Esophagus muscularis mucosa (tissue), 4 donors: ENCODE measurements at regions of chr1 and their contacts with region 1.

Region 1: GRCh38 chr1:227437495-227438008 is 119.3 kb upstream of the CDC42BPA start:
- DNase-seq: no peak
- H3K4me3 ChIP-seq: peak overlapping the region; percentile 32 to 52 (median 47)
- H3K27ac ChIP-seq: peak overlapping the region in 1 of 4 donors; percentile 21
- H3K4me1 ChIP-seq: peaks cover 12 to 21% (median 16%) of the 10 kb centered on the region in 4 donors
- H3K27me3 ChIP-seq: no peaks in the 10 kb centered on the region
- CTCF ChIP-seq: peak; percentile 46 to 58 (median 52)
- EP300 ChIP-seq: no peak
- POLR2A ChIP-seq: no peak

Region 2: DNA sequence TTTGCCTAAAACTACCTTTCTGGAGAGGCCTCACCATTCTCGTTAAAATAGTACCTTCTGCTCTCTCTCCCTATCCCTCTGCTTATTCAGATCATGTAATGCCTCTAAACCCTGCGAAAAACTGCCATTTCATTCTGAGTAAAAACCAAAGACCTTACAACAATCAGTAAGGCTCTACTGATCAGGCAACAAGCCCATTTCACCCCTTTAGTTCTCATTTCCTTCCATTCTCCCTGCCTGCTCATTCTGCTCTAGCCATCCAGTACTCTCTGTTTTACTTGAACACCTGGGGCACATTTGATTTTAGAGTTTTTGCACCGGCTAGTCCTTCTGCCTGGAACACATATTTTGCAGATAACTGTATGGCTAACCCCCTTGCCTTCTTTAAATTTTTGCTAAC is 309.7 kb before region 1 on chr1:
- intact Hi-C with region 1: loop called (anchors 5 kb)
- DNase-seq: no peak
- H3K4me3 ChIP-seq: no peak overlapping the region
- H3K27ac ChIP-seq: no peak overlapping the region
- H3K4me1 ChIP-seq: no peaks in the 10 kb centered on the region
- H3K27me3 ChIP-seq: no peaks in the 10 kb centered on the region
- CTCF ChIP-seq: no peak
- EP300 ChIP-seq: no peak
- POLR2A ChIP-seq: no peak

Region 3: DNA sequence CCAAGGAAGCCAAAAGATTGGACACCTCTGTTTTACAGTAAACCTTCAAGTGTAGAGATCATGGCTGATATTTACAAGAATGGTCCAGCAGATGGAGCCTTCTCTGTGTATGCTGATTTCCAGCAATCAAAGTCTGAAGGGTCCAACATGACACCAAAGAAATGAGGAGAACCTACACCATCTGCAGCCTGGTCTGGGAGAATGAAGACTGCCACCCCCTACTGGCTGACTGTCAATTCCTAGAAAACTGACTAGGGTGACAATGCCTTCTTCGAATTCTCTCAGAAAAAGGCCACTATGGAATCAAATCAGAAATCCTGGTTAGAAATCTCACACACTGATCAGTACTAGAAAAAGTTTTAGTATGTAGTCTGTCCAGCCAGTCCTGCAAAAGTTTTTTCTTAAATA is 202.6 kb before region 1 on chr1:
- intact Hi-C with region 1: loop called (anchors 5 kb)
- DNase-seq: no peak
- H3K4me3 ChIP-seq: no peak overlapping the region
- H3K27ac ChIP-seq: no peak overlapping the region
- H3K4me1 ChIP-seq: peaks cover 0 to 23% (median 15%) of the 10 kb centered on the region in 4 donors
- H3K27me3 ChIP-seq: no peaks in the 10 kb centered on the region
- CTCF ChIP-seq: peak; percentile 25 to 48 (median 28)
- EP300 ChIP-seq: no peak
- POLR2A ChIP-seq: no peak

Region 4: DNA sequence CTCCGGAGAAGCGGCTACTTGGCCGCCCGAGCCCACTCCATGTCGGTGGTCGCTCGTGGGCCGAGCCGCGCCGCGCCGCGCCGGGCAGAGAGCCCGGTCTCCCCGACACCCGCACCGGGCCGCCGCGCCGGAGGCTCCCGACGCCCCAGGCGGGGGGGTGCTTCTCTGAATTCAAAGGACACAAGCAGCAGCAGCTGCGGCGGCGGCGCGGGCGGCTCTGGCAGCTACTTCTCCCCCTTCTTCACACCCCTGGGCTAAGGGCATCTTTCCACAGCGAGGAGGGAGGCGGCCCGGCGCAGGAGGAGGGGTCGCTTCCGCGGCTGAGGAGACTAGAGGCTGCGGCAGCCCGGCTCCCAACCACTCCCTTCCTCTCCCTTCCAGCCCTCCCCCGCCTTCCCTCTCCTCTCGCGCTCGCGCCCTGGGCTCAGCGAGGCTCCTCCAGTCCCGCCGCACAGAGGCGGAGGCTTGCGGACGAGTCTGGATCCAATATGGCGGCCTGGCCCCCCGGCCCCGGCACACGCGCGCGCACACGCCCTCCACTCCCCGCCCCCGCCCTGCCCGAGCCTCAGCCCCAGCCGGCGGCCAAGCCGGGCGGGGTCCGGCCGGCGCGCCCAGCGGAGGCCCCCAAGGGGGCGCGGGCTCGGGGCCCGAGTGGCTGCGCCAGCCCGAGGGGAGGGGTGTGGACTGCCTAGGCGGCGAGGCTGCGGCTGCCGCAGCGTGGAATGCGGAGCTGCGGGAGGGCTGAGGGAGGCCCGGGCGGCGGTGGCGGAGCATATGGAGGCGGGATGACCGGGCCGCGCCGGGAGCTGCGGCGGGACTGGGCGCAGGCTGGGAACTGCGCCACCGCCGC is 119.3 kb before region 1 on chr1 and contains the start of gene CDC42BPA:
- intact Hi-C with region 1: loop called (anchors 10 kb)
- DNase-seq: no peak
- H3K4me3 ChIP-seq: peak within 1 kb of the TSS; percentile 87 to 97 (median 92)
- H3K27ac ChIP-seq: peak within 1 kb of the TSS; percentile 87 to 98 (median 96)
- H3K4me1 ChIP-seq: peaks cover 5 to 18% (median 12%) of the 10 kb centered on the region in 4 donors
- H3K27me3 ChIP-seq: no peaks in the 10 kb centered on the region
- CTCF ChIP-seq: no peak
- EP300 ChIP-seq: no peak
- POLR2A ChIP-seq: no peak
- total RNA-seq, gene CDC42BPA: 59.5 to 72.2 (median 69.7) TPM

Region 5: GRCh38 chr1:227330684-227331083 is 106.9 kb before region 1 on chr1:
- intact Hi-C with region 1: no loop called
- DNase-seq: no peak
- H3K4me3 ChIP-seq: no peak overlapping the region
- H3K27ac ChIP-seq: no peak overlapping the region
- H3K4me1 ChIP-seq: no peaks in the 10 kb centered on the region
- H3K27me3 ChIP-seq: no peaks in the 10 kb centered on the region
- CTCF ChIP-seq: no peak
- EP300 ChIP-seq: no peak
- POLR2A ChIP-seq: no peak